CD14-positive monocyte (primary cell): ENCODE measurements at regions of chr19 and their contacts with region 1.

Region 1: DNA sequence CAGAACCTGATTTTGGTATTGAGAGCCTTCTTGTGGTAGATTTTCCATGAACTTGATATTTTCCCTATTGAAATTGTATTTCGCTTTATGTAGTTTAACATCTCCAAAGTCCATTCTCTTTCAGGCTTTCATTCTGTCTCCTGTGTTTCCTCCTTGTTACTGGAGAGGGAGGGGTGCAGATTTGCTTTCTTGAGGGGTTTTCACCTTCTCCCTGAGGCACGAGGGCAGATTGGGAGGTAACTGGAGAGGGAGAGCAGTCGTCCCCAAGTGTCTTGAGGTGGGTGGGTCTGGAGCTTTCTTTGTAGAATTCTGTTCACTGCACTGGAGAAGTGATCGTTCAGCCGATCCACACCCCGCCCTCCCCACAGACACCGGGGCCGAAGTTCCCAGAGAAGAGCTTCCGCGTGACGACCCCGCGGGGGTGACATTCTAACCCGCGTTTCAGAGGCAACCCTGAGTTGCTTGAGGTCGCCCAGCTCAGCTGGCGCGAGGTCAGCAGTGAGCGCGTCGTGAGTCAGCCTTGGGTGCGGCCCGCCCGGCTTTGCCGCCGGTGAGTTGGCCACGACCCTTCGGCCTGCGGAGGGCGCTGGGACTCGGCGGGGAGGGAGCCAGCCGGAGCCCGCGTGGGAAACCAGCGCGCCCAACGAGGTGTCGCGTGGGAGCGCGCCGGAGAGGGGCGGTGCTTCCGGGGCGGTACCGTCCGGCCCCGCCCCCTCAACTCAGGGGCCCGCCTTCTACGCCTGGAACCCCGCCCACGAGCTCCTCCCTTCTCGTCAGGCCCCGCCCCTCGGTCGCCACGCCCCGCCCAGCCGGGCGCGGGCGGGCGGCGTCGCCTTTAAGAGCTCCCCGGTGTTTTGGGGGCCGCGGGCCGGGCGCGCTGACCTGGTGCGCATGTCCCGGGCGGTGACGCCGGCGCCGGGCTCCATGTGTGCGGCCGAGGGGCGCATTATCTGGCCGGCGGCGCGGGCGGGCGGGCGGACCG is at the start of gene GATAD2A:
- DNase-seq: peak; percentile 97 to 99 (median 99)
- H3K4me3 ChIP-seq: peak within 1 kb of the TSS; percentile 57 to 85 (median 66)
- H3K4me3 Mint-ChIP-seq: peak within 1 kb of the TSS; percentile 92 to 96
- H3K27ac ChIP-seq: peak within 1 kb of the TSS; percentile 99
- H3K27ac Mint-ChIP-seq: peak within 1 kb of the TSS; percentile 99 to 100 (median 99)
- H3K4me1 ChIP-seq: peaks cover 49 to 51% of the 10 kb centered on the region in 2 donors
- H3K4me1 Mint-ChIP-seq: peaks cover 70% of the 10 kb centered on the region
- H3K27me3 ChIP-seq: no peaks in the 10 kb centered on the region
- H3K27me3 Mint-ChIP-seq: peaks cover 0 to 3% (median 2%) of the 10 kb centered on the region in 3 donors
- CTCF ChIP-seq: peak; percentile 14
- polyA plus RNA-seq, gene GATAD2A: 8.0 to 35.9 (median 8.7) TPM

Region 2: DNA sequence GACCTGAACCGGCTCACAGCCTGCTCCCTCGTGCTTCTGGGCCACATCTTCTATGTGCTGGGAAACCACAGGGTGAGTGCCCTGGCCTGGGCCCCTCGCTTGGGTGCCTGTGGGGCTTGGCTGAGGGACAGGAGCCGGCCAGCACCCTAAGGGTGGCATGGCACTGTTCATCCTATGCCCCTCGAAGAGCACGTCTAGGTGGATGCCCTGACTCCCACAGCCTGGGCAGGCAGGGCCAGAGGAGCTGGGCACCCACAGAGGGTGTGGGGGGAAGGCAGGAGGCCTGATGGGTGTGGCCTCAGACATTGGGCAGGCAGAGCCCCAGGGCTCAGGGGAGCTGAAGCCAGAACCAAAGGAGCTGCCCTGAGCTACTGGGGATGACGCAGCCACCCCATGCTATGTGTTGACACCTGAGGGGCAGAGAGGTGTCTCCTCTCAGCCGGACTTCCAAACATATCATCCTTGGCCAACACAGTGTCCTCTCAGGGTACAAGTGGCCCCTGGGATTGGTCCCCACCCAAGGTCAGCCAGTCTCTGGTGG is 55.7 kb before region 1 on chr19:
- intact Hi-C with region 1: no loop called
- DNase-seq: no peak
- H3K4me3 ChIP-seq: no peak overlapping the region
- H3K4me3 Mint-ChIP-seq: no peak overlapping the region
- H3K27ac ChIP-seq: peak overlapping the region in 1 of 2 donors; percentile 41
- H3K27ac Mint-ChIP-seq: peak overlapping the region in 2 of 7 donors; percentile 54 to 62
- H3K4me1 ChIP-seq: no peaks in the 10 kb centered on the region
- H3K4me1 Mint-ChIP-seq: no peaks in the 10 kb centered on the region
- H3K27me3 ChIP-seq: no peaks in the 10 kb centered on the region
- H3K27me3 Mint-ChIP-seq: no peaks in the 10 kb centered on the region
- CTCF ChIP-seq: no peak

Region 3: DNA sequence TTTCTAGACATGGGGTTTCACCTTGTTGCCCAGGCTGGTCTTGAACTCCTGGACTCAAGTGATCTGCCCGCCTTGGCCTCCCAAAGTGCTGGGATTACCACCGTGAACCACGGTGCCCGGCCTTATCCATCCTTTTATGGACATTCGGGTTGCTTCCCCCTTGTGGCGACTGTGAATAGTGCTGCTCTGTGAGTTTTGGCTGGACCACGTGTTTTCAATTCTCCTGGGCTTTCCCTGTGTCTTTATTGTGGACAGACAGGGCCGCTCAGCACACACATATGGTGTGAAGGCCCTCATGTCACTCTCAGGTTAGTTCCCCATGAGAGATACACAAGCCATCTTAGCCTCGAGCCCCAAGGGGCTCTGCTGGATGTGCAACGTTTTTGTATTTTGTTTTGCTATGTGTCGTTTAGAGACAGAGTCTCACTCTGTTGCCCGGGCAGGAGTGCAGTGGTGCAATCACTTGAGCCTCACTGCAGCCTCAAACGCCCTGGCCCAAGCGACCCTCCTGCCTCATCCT is 44.0 kb before region 1 on chr19:
- intact Hi-C with region 1: no loop called
- DNase-seq: peak; percentile 72 to 84 (median 74)
- H3K4me3 ChIP-seq: no peak overlapping the region
- H3K4me3 Mint-ChIP-seq: no peak overlapping the region
- H3K27ac ChIP-seq: no peak overlapping the region
- H3K27ac Mint-ChIP-seq: peak overlapping the region in 3 of 7 donors; percentile 6 to 82 (median 8)
- H3K4me1 ChIP-seq: peaks cover 14 to 20% of the 10 kb centered on the region in 2 donors
- H3K4me1 Mint-ChIP-seq: peaks cover 15% of the 10 kb centered on the region
- H3K27me3 ChIP-seq: no peaks in the 10 kb centered on the region
- H3K27me3 Mint-ChIP-seq: peaks cover 0 to 6% (median 0%) of the 10 kb centered on the region in 3 donors
- CTCF ChIP-seq: peak; percentile 85

Region 4: GRCh38 chr19:19372656-19373416 is 32.3 kb before region 1 on chr19:
- intact Hi-C with region 1: loop called (anchors 5 kb)
- DNase-seq: peak; percentile 87 to 92 (median 88)
- H3K4me3 ChIP-seq: peak overlapping the region in 1 of 3 experiments; percentile 53
- H3K4me3 Mint-ChIP-seq: peak overlapping the region; percentile 41 to 59
- H3K27ac ChIP-seq: peak overlapping the region; percentile 79 to 91
- H3K27ac Mint-ChIP-seq: peak overlapping the region; percentile 82 to 96 (median 94)
- H3K4me1 ChIP-seq: peaks cover 60 to 62% of the 10 kb centered on the region in 2 donors
- H3K4me1 Mint-ChIP-seq: peaks cover 43% of the 10 kb centered on the region
- H3K27me3 ChIP-seq: no peaks in the 10 kb centered on the region
- H3K27me3 Mint-ChIP-seq: peaks cover 0 to 3% (median 0%) of the 10 kb centered on the region in 3 donors
- CTCF ChIP-seq: no peak

Region 5: DNA sequence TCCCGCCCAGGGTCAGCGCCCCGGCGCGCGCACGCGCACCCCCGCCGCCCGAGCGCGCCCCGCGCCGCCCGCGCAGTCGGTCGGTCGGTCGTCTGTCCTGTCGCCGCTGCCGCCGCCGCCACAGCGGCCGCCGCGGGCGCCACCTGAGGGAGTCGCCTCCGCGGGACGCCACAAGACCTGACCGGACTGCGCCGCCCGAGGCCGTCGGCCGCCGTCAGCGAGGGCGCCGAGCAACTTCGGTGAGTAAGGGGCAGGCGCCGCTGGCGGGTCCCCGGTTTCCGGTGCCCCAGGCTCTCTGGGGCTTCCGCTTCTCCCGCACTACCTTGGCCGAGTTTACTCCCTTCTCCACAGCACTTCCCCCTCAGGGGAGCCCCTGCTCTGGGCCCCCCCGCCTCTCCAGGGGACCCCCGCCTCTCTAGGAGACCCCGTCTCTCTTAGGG is 19.2 kb before region 1 on chr19:
- intact Hi-C with region 1: loop called in 1 of 2 experiments (anchors 1 kb)
- DNase-seq: peak; percentile 77 to 87 (median 84)
- H3K4me3 ChIP-seq: peak overlapping the region; percentile 87 to 99 (median 96)
- H3K4me3 Mint-ChIP-seq: peak overlapping the region; percentile 91 to 93
- H3K27ac ChIP-seq: peak overlapping the region; percentile 85 to 99
- H3K27ac Mint-ChIP-seq: peak overlapping the region; percentile 93 to 98 (median 96)
- H3K4me1 ChIP-seq: peaks cover 52 to 72% of the 10 kb centered on the region in 2 donors
- H3K4me1 Mint-ChIP-seq: peaks cover 64% of the 10 kb centered on the region
- H3K27me3 ChIP-seq: no peaks in the 10 kb centered on the region
- H3K27me3 Mint-ChIP-seq: peaks cover 0 to 6% (median 0%) of the 10 kb centered on the region in 3 donors
- CTCF ChIP-seq: no peak

Region 6: DNA sequence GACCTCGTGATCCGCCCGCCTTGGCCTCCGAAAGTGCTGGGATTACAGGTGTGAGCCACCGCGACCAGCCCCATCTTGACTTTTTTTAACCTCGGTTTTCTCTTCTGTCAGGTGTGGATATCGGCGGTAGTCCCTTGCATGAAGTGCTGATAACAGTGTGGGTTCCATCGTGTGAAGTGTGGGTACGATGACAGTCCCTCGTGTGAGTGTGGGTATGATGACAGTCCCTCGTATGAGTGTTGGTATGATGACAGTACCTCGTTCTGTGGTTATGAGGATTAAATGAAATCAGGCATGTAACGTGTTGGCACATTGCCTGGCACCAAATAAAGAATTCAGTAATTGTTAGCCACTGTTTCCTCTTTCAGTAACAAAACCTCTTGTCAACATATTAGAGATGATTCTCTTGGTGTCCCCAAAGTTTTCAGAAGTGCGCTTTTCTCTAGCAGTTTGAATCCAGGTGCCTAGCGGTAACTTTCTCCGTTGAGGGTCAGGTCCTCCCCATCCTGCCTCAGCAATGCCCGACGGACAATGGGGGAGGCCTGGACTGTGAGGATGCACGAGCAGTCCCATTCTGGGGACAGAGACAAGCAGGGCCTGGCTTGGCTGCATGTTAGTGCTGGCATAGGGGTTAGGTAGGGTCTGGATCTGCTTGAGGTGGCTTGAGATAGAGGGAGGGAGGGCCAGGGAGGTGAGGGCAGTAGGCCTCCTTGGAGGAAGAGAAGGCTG is 15.6 kb after region 1 on chr19:
- intact Hi-C with region 1: no loop called
- DNase-seq: peak; percentile 66 to 73 (median 68)
- H3K4me3 ChIP-seq: no peak overlapping the region
- H3K4me3 Mint-ChIP-seq: no peak overlapping the region
- H3K27ac ChIP-seq: peak overlapping the region in 1 of 2 donors; percentile 71
- H3K27ac Mint-ChIP-seq: peak overlapping the region; percentile 76 to 90 (median 87)
- H3K4me1 ChIP-seq: peaks cover 22 to 34% of the 10 kb centered on the region in 2 donors
- H3K4me1 Mint-ChIP-seq: peaks cover 46% of the 10 kb centered on the region
- H3K27me3 ChIP-seq: no peaks in the 10 kb centered on the region
- H3K27me3 Mint-ChIP-seq: peaks cover 0 to 1% (median 0%) of the 10 kb centered on the region in 3 donors
- CTCF ChIP-seq: no peak

Region 7: DNA sequence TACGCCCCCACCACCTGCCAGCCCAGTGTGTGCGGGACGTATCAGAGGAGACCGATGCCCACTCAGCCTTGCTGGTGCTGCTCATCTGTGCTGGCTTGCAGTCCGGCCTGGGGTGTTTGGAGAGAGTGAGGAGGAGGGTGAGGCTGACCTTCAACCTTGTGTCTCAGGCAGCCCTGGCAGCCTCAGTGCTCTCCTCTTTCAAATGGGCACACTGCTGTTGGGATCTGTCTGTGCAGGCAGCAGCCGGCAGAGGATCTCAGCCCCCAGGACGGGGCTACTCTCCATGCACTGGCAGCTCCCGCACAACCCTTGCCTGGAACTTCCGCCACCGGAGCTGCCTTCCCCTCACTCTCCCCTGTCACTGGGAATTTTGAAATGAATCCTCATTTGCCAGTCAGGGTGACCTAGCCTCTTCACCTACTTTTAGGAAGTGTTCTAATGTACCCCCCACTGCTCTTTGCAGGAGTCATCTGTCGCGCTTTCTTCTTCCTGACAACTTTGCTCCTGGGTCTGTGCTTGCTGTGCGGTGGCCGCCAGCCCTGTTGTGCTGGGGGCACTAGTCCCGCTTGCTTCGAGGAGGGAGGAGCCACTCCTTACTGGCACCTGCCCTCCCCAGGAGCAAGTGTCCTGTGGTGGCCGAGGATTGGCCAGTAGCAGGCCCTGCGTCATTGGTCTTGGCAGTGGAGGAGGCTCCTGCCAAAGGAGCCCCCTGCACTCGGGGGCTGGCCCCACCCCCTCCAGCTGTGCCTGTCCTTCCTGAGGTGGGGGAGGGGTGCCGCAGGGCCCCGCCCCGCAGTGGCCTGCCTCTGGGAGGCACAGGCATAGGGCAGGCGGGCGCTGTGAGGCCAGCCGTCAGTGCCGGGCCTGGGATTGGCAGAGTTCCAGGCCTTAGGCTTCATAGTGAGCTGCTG is 56.8 kb after region 1 on chr19:
- intact Hi-C with region 1: loop called in 1 of 2 experiments (anchors 2 kb)
- DNase-seq: peak in 2 of 3 donors; percentile 40 to 73
- H3K4me3 ChIP-seq: peak overlapping the region in 1 of 3 experiments; percentile 55
- H3K4me3 Mint-ChIP-seq: peak overlapping the region; percentile 45 to 74
- H3K27ac ChIP-seq: peak overlapping the region; percentile 94 to 98
- H3K27ac Mint-ChIP-seq: peak overlapping the region; percentile 97 to 99 (median 98)
- H3K4me1 ChIP-seq: peaks cover 71 to 72% of the 10 kb centered on the region in 2 donors
- H3K4me1 Mint-ChIP-seq: peaks cover 75% of the 10 kb centered on the region
- H3K27me3 ChIP-seq: no peaks in the 10 kb centered on the region
- H3K27me3 Mint-ChIP-seq: no peaks in the 10 kb centered on the region
- CTCF ChIP-seq: no peak

Region 8: GRCh38 chr19:19488875-19489690 is 83.9 kb after region 1 on chr19:
- intact Hi-C with region 1: loop called in 1 of 2 experiments (anchors 5 kb)
- DNase-seq: peak; percentile 93 to 99 (median 98)
- H3K4me3 ChIP-seq: peak overlapping the region; percentile 0 to 63 (median 9)
- H3K4me3 Mint-ChIP-seq: peak overlapping the region; percentile 62 to 75
- H3K27ac ChIP-seq: peak overlapping the region; percentile 87 to 94
- H3K27ac Mint-ChIP-seq: peak overlapping the region; percentile 94 to 97 (median 96)
- H3K4me1 ChIP-seq: peaks cover 23 to 32% of the 10 kb centered on the region in 2 donors
- H3K4me1 Mint-ChIP-seq: peaks cover 39% of the 10 kb centered on the region
- H3K27me3 ChIP-seq: no peaks in the 10 kb centered on the region
- H3K27me3 Mint-ChIP-seq: peaks cover 0 to 4% (median 0%) of the 10 kb centered on the region in 3 donors
- CTCF ChIP-seq: no peak

Region 9: GRCh38 chr19:19540715-19541440 is 135.7 kb after region 1 on chr19:
- intact Hi-C with region 1: no loop called
- DNase-seq: peak; percentile 32 to 44 (median 42)
- H3K4me3 ChIP-seq: peak overlapping the region in 1 of 3 experiments; percentile 66
- H3K4me3 Mint-ChIP-seq: peak overlapping the region; percentile 76 to 82
- H3K27ac ChIP-seq: no peak overlapping the region
- H3K27ac Mint-ChIP-seq: peak overlapping the region in 3 of 7 donors; percentile 20 to 87 (median 23)
- H3K4me1 ChIP-seq: peaks cover 33 to 40% of the 10 kb centered on the region in 2 donors
- H3K4me1 Mint-ChIP-seq: peaks cover 37% of the 10 kb centered on the region
- H3K27me3 ChIP-seq: peaks cover 8 to 43% of the 10 kb centered on the region in 2 donors
- H3K27me3 Mint-ChIP-seq: peaks cover 37 to 59% (median 50%) of the 10 kb centered on the region in 3 donors
- CTCF ChIP-seq: no peak